Activated naive CD4-positive, alpha-beta T cell treated with anti-CD3 and anti-CD28 coated beads, Interleukin-2, amount 10 ng/mL, durations not matched to agents 7 days and 5 days (primary cell): ENCODE measurements at regions of chr12 and their contacts with region 1.

Region 1: GRCh38 chr12:130826149-130826801 is 12.8 kb downstream of the STX2 start:
- DNase-seq: peak; percentile 72
- H3K4me3 Mint-ChIP-seq: no peak overlapping the region
- H3K27ac Mint-ChIP-seq: no peak overlapping the region
- H3K4me1 Mint-ChIP-seq: peaks cover 23% of the 10 kb centered on the region
- H3K27me3 Mint-ChIP-seq: no peaks in the 10 kb centered on the region

Region 2: GRCh38 chr12:130838951-130839769 is 12.9 kb after region 1 on chr12 and contains the start of gene STX2:
- CTCF ChIA-PET with region 1: interaction called, 24 read pairs
- DNase-seq: peak; percentile 89
- H3K4me3 Mint-ChIP-seq: peak within 1 kb of the TSS; percentile 81
- H3K27ac Mint-ChIP-seq: peak within 1 kb of the TSS; percentile 79
- H3K4me1 Mint-ChIP-seq: peaks cover 39% of the 10 kb centered on the region
- H3K27me3 Mint-ChIP-seq: peaks cover 3% of the 10 kb centered on the region